ENCODE measurements at regions of chr12 and their contacts with region 1.

Region 1: DNA sequence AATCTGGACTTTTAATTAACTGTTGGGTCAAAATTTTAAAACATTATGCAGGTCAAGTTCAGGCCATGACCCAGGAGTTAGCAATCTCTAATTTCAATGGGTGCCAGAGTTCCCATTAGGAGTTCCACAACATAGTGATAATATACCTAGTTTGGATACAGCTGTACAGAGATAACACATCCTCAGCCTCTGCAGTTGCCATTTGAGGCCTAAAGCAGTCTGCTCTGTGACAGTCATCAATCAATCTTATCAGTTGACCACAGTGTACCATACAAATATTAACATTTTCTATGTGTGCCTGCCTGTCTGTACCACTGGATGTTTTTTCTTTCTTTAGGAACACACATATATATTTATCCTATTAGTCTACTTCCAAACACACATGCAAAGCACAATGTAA is 54.0 kb upstream of the BBS10 start:
- DNase-seq: no peak
- H3K4me3 ChIP-seq: no peak overlapping the region
- H3K27ac ChIP-seq: no peak overlapping the region
- H3K4me1 ChIP-seq: no peaks in the 10 kb centered on the region
- H3K27me3 ChIP-seq: no peaks in the 10 kb centered on the region
- CTCF ChIP-seq: no peak
- POLR2A ChIP-seq: no peak

Region 2: GRCh38 chr12:76259660-76260389 is 142.4 kb before region 1 on chr12:
- CTCF ChIA-PET with region 1: no interaction called
- POLR2A ChIA-PET with region 1: no interaction called
- dilution Hi-C with region 1: no loop called
- intact Hi-C with region 1: no loop called
- DNase-seq: peak; percentile 93
- H3K4me3 ChIP-seq: peak overlapping the region; percentile 19 to 96 (median 95)
- H3K27ac ChIP-seq: peak overlapping the region; percentile 96
- H3K4me1 ChIP-seq: peaks cover 30% of the 10 kb centered on the region
- H3K27me3 ChIP-seq: no peaks in the 10 kb centered on the region
- CTCF ChIP-seq: no peak
- POLR2A ChIP-seq: peak; percentile 89

Region 3: GRCh38 chr12:76664731-76665130 is 262.5 kb after region 1 on chr12:
- CTCF ChIA-PET with region 1: no interaction called
- POLR2A ChIA-PET with region 1: no interaction called
- dilution Hi-C with region 1: no loop called
- intact Hi-C with region 1: loop called (anchors 5 kb)
- DNase-seq: no peak
- H3K4me3 ChIP-seq: no peak overlapping the region
- H3K27ac ChIP-seq: no peak overlapping the region
- H3K4me1 ChIP-seq: peaks cover 15% of the 10 kb centered on the region
- H3K27me3 ChIP-seq: no peaks in the 10 kb centered on the region
- CTCF ChIP-seq: no peak
- POLR2A ChIP-seq: no peak

Region 4: DNA sequence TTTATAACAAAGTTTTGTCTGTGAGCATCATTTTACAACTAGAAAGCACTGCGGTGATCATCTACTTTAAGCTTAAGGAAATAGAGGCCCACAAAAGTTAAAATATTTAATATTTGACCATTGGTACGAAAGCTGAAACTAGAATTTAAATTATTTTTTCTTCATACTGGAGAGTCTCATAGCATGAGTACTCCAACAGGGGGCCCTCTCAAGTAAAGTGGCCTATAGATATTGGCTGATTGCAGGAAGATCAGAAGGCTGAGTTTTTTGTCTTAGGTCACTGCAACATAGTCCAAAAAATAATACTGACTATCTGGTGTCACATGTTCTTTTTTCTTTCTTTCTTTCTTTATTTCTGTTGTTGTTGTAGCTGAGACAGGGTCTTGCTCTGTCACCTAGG is 286.4 kb after region 1 on chr12:
- CTCF ChIA-PET with region 1: no interaction called
- POLR2A ChIA-PET with region 1: no interaction called
- dilution Hi-C with region 1: no loop called
- intact Hi-C with region 1: no loop called
- DNase-seq: no peak
- H3K4me3 ChIP-seq: no peak overlapping the region
- H3K27ac ChIP-seq: no peak overlapping the region
- H3K4me1 ChIP-seq: peaks cover 9% of the 10 kb centered on the region
- H3K27me3 ChIP-seq: no peaks in the 10 kb centered on the region
- CTCF ChIP-seq: peak; percentile 8 to 13
- POLR2A ChIP-seq: no peak

Measured in endothelial cell of umbilical vein (primary cell).